ENCODE measurements at regions of chr2 and their contacts with region 1.

Region 1: DNA sequence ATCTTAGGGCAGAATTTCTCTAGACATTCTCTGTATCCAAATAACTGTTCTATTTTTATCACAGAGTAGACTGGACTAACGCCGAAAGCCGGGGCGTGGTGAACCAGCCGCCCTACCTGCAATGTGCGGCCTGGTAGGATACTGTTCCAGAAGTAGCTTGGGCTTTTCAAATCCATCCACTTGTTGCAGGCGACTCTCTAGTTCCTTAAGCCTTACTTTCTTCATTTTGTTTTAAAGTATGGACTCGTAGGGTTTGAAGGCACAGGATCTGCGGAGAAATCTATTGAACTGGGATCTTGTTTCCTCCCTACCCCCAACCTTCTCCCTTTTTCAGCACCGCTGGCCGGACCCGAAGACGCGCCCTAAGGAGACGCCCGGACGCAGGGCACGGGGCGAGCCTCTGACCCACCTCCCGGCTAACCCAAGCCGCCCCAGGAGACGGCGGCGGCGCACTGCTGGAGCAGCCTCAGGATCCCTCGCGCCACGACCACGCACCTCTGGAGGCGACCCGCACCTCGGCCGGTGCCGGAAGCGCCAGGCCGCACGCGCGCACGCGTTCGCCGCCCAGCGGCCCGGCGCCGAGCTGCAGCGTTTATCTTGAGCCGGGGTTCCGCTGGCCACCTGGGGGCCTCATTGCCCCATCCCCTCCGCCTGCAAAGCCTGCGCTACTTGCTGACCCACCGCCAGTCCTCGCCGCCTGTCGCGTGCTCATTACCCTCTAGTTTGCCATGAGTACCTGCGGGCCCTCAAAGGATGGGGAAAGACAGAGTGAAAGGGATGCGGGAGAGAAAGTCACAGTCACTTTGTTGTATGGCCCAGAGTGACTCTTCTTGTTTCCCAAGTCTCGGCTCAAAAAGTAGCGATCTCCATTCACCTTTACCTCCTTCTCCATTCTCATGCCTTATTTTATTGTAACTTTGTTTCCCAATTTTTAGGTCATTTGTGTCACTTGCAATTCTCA is at the start of gene METTL5:
- DNase-seq: peak; percentile 95
- total RNA-seq, gene METTL5: 57.3 to 76.8 TPM

Region 2: DNA sequence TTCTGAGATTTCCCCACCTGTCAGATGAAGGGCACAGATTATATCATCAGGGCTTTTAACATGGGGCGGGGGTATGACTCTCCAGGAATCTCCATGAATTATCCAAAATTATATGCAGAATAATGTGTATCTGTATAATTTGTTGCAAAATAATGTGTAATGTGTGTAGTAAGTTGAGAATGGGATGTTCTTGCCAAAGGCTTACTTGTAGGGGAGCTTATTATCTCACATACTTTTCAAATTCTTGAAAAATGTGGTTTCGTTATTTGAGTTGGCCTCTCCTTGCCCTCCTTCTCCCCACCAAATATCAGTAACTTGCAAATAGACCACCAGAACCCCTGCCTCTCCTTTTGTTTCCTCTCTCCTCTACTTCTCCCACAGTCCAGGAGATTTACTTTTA is 38.2 kb after region 1 on chr2:
- intact Hi-C with region 1: no loop called
- DNase-seq: no peak

Region 3: DNA sequence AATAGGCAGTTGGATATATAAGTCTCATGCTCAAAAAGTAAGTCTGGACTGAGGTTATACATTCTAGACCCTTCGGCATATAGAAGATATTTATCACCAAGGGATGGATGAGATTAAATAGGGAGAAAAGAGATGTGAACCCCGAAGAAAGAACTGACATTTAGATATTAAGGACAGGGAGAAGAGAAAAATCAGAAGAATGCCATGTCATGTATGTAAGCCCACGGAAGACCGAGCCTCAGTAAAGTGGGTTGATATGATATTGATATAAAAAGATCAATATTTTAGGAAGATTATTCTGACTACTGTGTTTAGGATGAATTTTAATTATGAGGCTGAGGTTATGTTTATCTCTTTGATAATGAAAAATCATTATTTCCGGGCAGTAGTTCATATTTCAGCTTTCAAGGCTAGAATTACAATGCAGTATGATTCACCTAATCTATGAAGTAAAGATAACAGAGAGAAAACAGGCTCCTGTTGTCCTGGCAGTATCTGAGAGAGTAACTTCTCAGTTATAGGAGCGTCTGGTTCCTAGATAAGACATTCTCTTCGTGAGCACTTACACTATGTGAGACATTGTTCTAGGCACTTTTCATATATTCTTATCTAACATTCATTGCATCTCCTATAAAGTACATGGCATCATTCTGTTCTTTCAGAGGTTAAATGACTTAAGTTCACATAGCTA is 85.6 kb after region 1 on chr2:
- intact Hi-C with region 1: loop called in 1 of 2 experiments (anchors 10 kb)
- DNase-seq: no peak

Region 4: DNA sequence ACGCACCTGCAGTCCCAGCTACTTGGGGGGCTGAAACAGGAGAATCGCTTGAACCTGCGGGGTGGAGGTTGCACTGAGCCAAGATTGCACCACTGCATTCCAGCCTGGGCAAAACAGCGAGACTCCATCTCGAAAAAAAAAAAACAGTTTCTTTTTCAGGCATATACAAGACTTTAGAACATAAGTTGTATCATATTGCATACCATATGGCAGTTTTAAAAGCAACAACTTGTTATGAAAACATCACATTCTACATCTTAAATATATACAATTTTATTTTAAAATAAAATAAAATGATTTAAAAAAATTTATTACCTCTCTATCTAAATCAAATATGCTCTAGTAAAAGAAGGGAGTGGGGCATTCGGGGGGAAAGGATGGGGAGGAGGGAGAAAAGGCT is 851.0 kb after region 1 on chr2:
- intact Hi-C with region 1: no loop called
- DNase-seq: no peak

Measured in posterior vena cava (tissue), 2 donors.